ENCODE measurements at regions of chr10 and their contacts with region 1.

Region 1: GRCh38 chr10:73765066-73765465 is 16.8 kb upstream of the CHCHD1 start:
- DNase-seq: no peak
- ATAC-seq: no peak
- H3K4me3 ChIP-seq: no peak overlapping the region
- H3K4me3 Mint-ChIP-seq: no peak overlapping the region
- H3K27ac ChIP-seq: no peak overlapping the region
- H3K27ac Mint-ChIP-seq: no peak overlapping the region
- H3K4me1 ChIP-seq: peaks cover 20% of the 10 kb centered on the region
- H3K4me1 Mint-ChIP-seq: peaks cover 30% of the 10 kb centered on the region
- H3K27me3 ChIP-seq: no peaks in the 10 kb centered on the region
- H3K27me3 Mint-ChIP-seq: no peaks in the 10 kb centered on the region
- CTCF ChIP-seq: no peak

Region 2: GRCh38 chr10:73750819-73751218 is 14.2 kb before region 1 on chr10:
- CTCF ChIA-PET with region 1: interaction called, 7 read pairs
- POLR2A ChIA-PET with region 1: interaction called, 4 read pairs
- intact Hi-C with region 1: loop called in 1 of 2 experiments (anchors 2 kb)
- DNase-seq: no peak
- ATAC-seq: no peak
- H3K4me3 ChIP-seq: no peak overlapping the region
- H3K4me3 Mint-ChIP-seq: no peak overlapping the region
- H3K27ac ChIP-seq: no peak overlapping the region
- H3K27ac Mint-ChIP-seq: no peak overlapping the region
- H3K4me1 ChIP-seq: peaks cover 34% of the 10 kb centered on the region
- H3K4me1 Mint-ChIP-seq: peaks cover 42% of the 10 kb centered on the region
- H3K27me3 ChIP-seq: no peaks in the 10 kb centered on the region
- H3K27me3 Mint-ChIP-seq: no peaks in the 10 kb centered on the region
- CTCF ChIP-seq: no peak

Measured in CD4-positive, alpha-beta T cell (primary cell).